GM10248 (cell line): ENCODE measurements at regions of chr21 and their contacts with region 1.

Region 1: GRCh38 chr21:33924079-33924765 is 8.6 kb upstream of the ATP5PO start:
- DNase-seq: peak; percentile 79
- CTCF ChIP-seq: peak; percentile 94

Region 2: GRCh38 chr21:33451634-33452071 is 472.6 kb before region 1 on chr21:
- CTCF ChIA-PET with region 1: no interaction called
- POLR2A ChIA-PET with region 1: no interaction called
- DNase-seq: no peak
- CTCF ChIP-seq: no peak

Region 3: DNA sequence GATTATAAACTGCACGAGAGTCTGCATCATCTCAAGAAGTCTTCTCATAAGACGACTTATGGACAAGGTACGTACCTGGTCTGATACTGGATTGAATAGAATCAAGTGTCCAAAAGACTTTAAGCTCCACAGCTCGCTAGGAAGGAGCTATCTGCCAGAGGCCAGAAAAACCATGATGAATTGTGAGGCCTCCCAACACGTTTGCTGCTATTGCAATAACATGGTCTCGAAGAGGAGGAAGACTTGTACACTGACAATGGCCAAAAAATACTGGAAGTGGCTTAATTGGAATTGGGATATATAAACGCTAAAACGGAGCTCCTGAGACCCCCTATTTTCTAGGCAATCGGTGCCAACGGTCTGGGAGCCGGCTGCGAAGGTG is 433.2 kb before region 1 on chr21:
- CTCF ChIA-PET with region 1: no interaction called
- POLR2A ChIA-PET with region 1: no interaction called
- DNase-seq: no peak
- CTCF ChIP-seq: no peak

Region 4: DNA sequence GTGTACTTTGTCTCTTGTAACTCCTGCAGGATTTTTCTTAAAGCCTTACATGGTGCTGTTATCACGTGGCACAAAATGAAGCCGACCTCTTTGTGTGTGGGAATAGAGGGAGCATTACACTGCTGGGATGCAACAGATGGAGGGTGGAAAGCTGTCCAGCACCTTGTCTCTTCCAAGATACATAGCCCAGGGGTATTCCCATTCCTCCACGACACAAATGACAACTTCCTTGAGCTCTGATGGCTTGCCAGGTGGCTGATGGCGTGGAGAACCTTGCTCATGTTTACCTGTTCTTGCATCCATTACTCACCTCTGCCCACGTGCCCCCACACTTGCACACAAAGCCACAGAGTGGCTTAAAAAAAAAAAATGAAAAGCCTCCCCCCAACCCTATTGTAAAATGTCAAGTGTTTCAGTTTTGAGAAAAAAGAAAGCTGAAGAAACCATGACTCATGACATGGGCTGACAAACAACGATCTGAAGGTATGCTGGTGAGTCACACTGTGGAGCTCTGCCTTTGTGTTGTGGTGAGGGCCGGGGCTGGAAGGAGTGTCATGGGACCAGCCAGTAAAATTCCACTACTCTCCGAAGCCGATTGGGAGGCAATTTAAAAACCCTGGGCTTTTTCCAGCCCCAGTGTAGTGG is 23.4 kb after region 1 on chr21:
- CTCF ChIA-PET with region 1: interaction called, 31 read pairs
- POLR2A ChIA-PET with region 1: interaction called, 5 read pairs
- DNase-seq: peak; percentile 78
- CTCF ChIP-seq: no peak

Region 5: GRCh38 chr21:33964706-33965325 is 40.6 kb after region 1 on chr21:
- CTCF ChIA-PET with region 1: interaction called, 13 read pairs
- POLR2A ChIA-PET with region 1: no interaction called
- DNase-seq: no peak
- CTCF ChIP-seq: no peak

Region 6: GRCh38 chr21:34020005-34020847 is 96.0 kb after region 1 on chr21:
- CTCF ChIA-PET with region 1: interaction called, 15 read pairs
- POLR2A ChIA-PET with region 1: no interaction called
- DNase-seq: peak; percentile 25
- CTCF ChIP-seq: peak; percentile 9

Region 7: GRCh38 chr21:34100790-34101189 is 176.6 kb after region 1 on chr21:
- CTCF ChIA-PET with region 1: interaction called, 10 read pairs
- POLR2A ChIA-PET with region 1: no interaction called
- DNase-seq: no peak
- CTCF ChIP-seq: no peak

Region 8: GRCh38 chr21:34243562-34243961 is 319.3 kb after region 1 on chr21:
- CTCF ChIA-PET with region 1: interaction called, 31 read pairs
- POLR2A ChIA-PET with region 1: no interaction called
- DNase-seq: no peak
- CTCF ChIP-seq: peak; percentile 34

Region 9: GRCh38 chr21:34367321-34367935 is 443.2 kb after region 1 on chr21:
- CTCF ChIA-PET with region 1: interaction called, 22 read pairs
- POLR2A ChIA-PET with region 1: no interaction called
- DNase-seq: peak; percentile 40
- CTCF ChIP-seq: peak; percentile 69